ENCODE measurements at regions of chr9 and their contacts with region 1.

Region 1: GRCh38 chr9:89000973-89001916 is 10.0 kb downstream of the S1PR3 start:
- DNase-seq: peak; percentile 46 to 94
- H3K4me3 ChIP-seq: peak overlapping the region; percentile 33 to 39
- H3K27ac ChIP-seq: peak overlapping the region; percentile 72 to 75
- H3K4me1 ChIP-seq: peaks cover 18 to 44% of the 10 kb centered on the region in 2 donors
- H3K27me3 ChIP-seq: no peaks in the 10 kb centered on the region
- CTCF ChIP-seq: peak; percentile 76 to 87 (median 76)

Region 2: GRCh38 chr9:88593537-88594185 is 407.6 kb before region 1 on chr9:
- intact Hi-C with region 1: loop called (anchors 1 kb)
- DNase-seq: peak in 1 of 2 donors; percentile 80
- H3K4me3 ChIP-seq: no peak overlapping the region
- H3K27ac ChIP-seq: no peak overlapping the region
- H3K4me1 ChIP-seq: no peaks in the 10 kb centered on the region
- H3K27me3 ChIP-seq: no peaks in the 10 kb centered on the region
- CTCF ChIP-seq: peak; percentile 54 to 75 (median 68)

Region 3: DNA sequence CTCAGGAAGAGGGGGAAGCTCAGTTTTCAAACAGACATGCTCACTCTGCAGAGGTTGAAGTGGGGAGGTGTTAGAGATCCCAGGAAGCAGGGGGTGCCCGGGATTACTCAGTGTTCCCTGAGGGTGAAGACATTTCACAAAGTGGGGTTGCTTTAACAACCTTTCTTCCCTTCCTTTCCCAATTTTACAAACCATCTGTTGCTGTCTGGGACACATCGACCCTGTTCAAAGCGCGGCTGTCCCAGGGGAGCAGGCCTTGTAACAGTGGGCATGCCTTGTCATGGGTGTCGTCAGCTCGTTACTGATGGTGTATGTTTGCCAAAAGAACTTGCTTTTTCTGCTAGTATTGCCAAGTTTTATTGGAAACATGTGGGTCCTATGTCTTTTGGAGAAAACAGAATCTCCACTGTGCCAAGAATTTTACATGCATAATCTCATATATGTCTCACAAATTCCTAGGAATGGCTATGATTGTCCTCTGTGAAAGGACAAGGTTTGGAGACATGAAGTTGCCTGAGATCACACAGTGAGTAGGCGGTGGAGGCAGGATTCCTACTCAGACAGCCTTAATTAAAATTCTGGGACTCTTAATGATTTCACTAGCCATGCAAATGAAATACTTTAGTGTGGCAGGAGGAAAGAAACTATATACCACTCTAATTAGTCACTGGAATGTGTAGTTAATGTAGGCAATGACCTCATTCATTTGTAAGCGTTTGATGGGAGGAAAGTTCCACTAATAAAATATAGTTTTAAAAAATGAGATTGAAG is 267.4 kb before region 1 on chr9:
- intact Hi-C with region 1: loop called (anchors 5 kb)
- DNase-seq: peak in 1 of 2 donors; percentile 75
- H3K4me3 ChIP-seq: no peak overlapping the region
- H3K27ac ChIP-seq: no peak overlapping the region
- H3K4me1 ChIP-seq: peaks cover 0 to 6% of the 10 kb centered on the region in 2 donors
- H3K27me3 ChIP-seq: no peaks in the 10 kb centered on the region
- CTCF ChIP-seq: no peak

Region 4: GRCh38 chr9:88874383-88874782 is 126.9 kb before region 1 on chr9:
- intact Hi-C with region 1: no loop called
- DNase-seq: no peak
- H3K4me3 ChIP-seq: no peak overlapping the region
- H3K27ac ChIP-seq: no peak overlapping the region
- H3K4me1 ChIP-seq: no peaks in the 10 kb centered on the region
- H3K27me3 ChIP-seq: no peaks in the 10 kb centered on the region
- CTCF ChIP-seq: no peak

Region 5: DNA sequence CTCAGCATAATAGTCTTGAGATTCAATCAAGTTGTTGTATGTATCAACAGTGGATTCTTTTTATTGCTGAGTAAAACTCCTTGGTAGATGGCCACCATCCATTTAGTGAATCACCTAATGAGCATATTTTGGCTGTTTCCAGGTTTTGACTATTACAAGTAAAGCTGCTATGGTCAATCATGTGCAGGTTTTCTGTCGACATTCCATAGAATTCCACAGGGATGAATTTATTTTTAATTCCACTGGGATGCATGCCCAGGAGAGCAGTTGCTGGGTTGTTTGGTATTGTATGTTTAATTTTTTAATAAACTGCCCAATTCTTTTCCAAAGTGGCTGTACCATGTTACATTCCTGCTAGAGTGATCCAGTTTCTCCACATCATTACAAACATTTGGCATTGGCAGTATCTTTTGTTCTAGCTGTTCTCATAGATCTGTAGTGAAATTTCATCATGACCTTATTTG is 20.5 kb before region 1 on chr9:
- intact Hi-C with region 1: loop called (anchors 1 kb)
- DNase-seq: peak in 1 of 2 donors; percentile 64
- H3K4me3 ChIP-seq: no peak overlapping the region
- H3K27ac ChIP-seq: peak overlapping the region; percentile 49 to 53
- H3K4me1 ChIP-seq: no peaks in the 10 kb centered on the region
- H3K27me3 ChIP-seq: no peaks in the 10 kb centered on the region
- CTCF ChIP-seq: no peak

Region 6: DNA sequence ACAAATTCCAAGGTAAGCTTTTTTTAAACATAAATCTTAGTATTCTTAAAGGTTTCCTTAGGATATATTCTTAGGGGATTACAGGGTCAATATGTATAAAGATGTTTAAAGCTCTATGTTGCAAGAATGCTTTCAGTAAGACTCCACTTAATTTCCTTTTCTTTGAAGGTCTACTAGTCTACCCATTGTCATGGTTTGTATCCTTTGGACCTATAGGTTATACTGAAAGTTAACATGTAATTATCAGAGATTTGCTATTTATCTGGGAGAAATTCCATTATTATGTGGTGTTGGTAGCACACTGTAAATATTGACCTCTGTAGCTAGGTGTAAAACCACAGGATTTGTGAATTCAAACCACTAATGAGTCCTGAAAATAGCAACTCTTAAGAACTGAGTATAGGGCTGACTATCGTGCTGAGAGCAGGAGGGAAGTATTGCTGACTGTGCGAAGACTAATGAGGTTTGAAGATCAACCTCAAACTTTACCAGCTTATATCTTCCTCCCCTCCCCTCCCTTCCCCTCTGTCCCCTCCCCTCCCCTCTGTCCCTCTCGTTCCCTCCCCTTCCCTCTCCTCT is 689.2 kb after region 1 on chr9:
- intact Hi-C with region 1: no loop called
- DNase-seq: no peak
- H3K4me3 ChIP-seq: no peak overlapping the region
- H3K27ac ChIP-seq: no peak overlapping the region
- H3K4me1 ChIP-seq: peaks cover 4 to 5% of the 10 kb centered on the region in 2 donors
- H3K27me3 ChIP-seq: no peaks in the 10 kb centered on the region
- CTCF ChIP-seq: no peak

Measured in ascending aorta (tissue), 2 donors.